Heart left ventricle (tissue), 16 donors: ENCODE measurements at regions of chr18 and their contacts with region 1.

Region 1: GRCh38 chr18:1578505-1578904 is 673.8 kb downstream of the ADCYAP1 start:
- DNase-seq: peak in 2 of 5 donors; percentile 9 to 20
- ATAC-seq: no peak
- H3K4me3 ChIP-seq: no peak overlapping the region
- H3K27ac ChIP-seq: peak overlapping the region in 1 of 12 donors; percentile 21
- H3K4me1 ChIP-seq: no peaks in the 10 kb centered on the region
- H3K27me3 ChIP-seq: peaks cover 0 to 3% (median 0%) of the 10 kb centered on the region in 9 donors
- CTCF ChIP-seq: no peak
- POLR2A ChIP-seq: no peak

Region 2: DNA sequence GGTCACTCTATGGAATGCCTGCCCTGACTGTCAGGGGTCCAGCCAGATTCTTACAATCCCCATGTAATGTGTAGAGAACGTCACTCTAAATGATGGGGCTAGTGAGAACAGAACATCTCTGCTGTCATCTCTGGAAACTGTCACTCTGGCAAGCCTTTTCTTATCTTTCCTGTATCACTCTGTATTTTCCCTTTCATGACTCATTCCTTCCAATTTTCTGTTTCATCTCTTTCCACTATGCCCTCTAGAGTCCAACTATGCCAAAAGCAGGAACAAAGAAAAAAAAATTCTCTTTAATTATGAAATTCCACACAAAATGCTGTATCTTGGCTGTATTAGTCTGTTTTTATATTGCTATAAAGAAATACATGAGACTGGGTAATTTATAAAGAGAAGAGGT is 65.0 kb before region 1 on chr18:
- intact Hi-C with region 1: no loop called
- DNase-seq: no peak
- ATAC-seq: no peak
- H3K4me3 ChIP-seq: no peak overlapping the region
- H3K27ac ChIP-seq: no peak overlapping the region
- H3K4me1 ChIP-seq: no peaks in the 10 kb centered on the region
- H3K27me3 ChIP-seq: no peaks in the 10 kb centered on the region
- CTCF ChIP-seq: no peak
- POLR2A ChIP-seq: no peak

Region 3: DNA sequence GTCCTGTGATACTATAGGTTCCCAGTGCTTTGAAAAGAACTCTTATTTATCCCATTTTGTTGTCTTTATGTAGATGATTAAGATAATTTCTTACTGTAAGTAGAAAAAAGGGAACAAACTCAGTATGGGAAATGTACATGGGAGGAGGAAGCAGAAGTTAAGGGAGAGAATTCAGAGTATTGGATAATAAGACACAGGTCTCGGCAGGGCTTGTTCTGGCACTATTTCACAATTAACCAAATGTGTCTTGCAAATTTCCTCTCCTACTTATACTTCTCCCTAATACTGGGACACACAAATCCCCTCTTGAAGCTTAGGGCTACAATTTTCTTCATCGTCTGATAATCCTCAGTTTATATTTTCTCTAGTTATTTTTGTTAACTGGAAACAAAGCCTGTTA is 70.2 kb after region 1 on chr18:
- intact Hi-C with region 1: no loop called
- DNase-seq: no peak
- ATAC-seq: peak in 2 of 4 donors; percentile 29 to 69
- H3K4me3 ChIP-seq: no peak overlapping the region
- H3K27ac ChIP-seq: peak overlapping the region in 1 of 12 donors; percentile 49
- H3K4me1 ChIP-seq: peaks cover 0 to 8% (median 0%) of the 10 kb centered on the region in 12 donors
- H3K27me3 ChIP-seq: no peaks in the 10 kb centered on the region
- CTCF ChIP-seq: no peak
- POLR2A ChIP-seq: no peak

Region 4: DNA sequence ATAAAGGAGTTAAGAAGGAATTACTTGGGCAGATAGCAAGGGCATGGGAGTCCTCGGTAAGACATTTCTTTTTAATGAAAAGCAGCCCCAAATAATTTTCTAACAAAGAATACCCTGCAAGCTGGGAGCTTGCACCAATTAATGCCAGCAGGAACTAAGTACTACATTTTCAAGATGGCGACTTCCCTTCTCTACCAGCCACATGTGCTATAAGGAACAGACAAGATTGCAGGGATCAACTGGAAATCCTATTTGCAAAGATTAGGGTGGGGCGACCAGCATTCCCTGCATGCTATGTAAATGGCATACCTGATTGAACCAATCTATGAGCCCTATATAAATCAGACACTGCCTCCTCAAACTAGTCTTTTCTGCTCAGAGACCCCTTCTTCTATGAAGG is 153.6 kb after region 1 on chr18:
- intact Hi-C with region 1: no loop called
- DNase-seq: no peak
- ATAC-seq: no peak
- H3K4me3 ChIP-seq: no peak overlapping the region
- H3K27ac ChIP-seq: no peak overlapping the region
- H3K4me1 ChIP-seq: no peaks in the 10 kb centered on the region
- H3K27me3 ChIP-seq: no peaks in the 10 kb centered on the region
- CTCF ChIP-seq: no peak
- POLR2A ChIP-seq: no peak

Region 5: DNA sequence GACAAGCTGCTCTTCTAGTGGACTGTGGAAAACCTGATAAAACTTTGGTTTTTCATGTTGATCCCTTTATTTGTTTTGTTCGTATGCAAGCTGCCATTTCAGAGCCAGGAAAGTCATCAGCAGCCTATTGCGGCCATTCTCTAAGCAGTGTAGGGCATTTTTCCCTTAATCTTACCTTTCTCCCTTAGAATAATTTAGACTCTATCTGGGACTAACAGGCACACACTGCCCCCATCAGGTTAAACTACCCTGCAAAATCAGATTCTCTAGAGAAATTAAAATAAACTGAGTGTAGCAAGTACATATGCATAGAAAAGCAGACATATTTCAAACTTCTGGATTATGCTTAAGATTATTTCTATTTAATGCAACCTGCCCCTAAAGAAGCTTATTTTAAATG is 645.3 kb after region 1 on chr18:
- intact Hi-C with region 1: loop called in 6 of 10 experiments (anchors 5 to 10 kb)
- DNase-seq: peak in 1 of 5 donors; percentile 26
- ATAC-seq: peak in 3 of 4 donors; percentile 45 to 70 (median 46)
- H3K4me3 ChIP-seq: peak overlapping the region in 9 of 12 donors; percentile 16 to 43 (median 24)
- H3K27ac ChIP-seq: no peak overlapping the region
- H3K4me1 ChIP-seq: no peaks in the 10 kb centered on the region
- H3K27me3 ChIP-seq: peaks cover 0 to 4% (median 0%) of the 10 kb centered on the region in 9 donors
- CTCF ChIP-seq: peak; percentile 32 to 68 (median 53)
- POLR2A ChIP-seq: no peak